HepG2 (cell line): ENCODE measurements at regions of chr14 and their contacts with region 1.

Region 1: GRCh38 chr14:39015360-39015961 is 87.6 kb downstream of the SEC23A start:
- DNase-seq: peak; percentile 84
- ATAC-seq: peak; percentile 41; the same call in 2 of the 3 replicates
- H3K4me3 ChIP-seq: no peak overlapping the region
- H3K27ac ChIP-seq: no peak overlapping the region
- H3K4me1 ChIP-seq: peaks cover 34% of the 10 kb centered on the region
- H3K27me3 ChIP-seq: no peaks in the 10 kb centered on the region
- CTCF ChIP-seq: peak; percentile 88
- EP300 ChIP-seq: no peak
- POLR2A ChIP-seq: no peak
- RAD21 ChIP-seq: peak; percentile 81

Region 2: DNA sequence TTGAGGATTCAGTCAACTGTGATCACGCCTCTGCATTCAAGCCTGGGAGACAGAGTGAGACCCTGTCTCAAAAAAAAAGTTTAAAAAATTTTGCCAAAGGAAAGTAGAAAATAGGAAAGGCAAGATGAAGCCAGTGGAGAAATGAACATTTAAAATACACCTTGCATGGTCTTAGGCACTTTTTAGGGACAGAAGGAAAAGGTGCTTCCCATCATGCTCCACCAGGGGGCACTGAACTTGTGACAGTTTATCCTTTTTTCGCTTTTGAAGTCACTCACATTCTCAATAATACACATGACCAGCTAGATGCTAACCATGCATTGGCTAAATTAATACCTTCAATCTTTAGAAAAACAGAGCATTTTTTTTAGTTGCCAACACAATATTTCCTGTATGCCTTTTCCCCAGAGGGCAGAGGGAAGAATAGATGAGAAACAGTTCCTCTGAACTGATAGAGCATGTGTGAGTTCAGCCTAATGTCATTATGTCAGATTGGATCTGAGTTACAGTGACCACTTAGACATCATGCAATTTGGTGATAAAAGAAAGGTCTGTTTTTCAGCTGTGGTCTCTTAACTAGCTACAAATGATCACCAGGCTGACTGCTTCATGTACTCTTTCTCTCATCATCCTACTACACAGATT is 1029.5 kb before region 1 on chr14:
- CTCF ChIA-PET with region 1: no interaction called
- POLR2A ChIA-PET with region 1: no interaction called
- in situ Hi-C with region 1: no loop called
- intact Hi-C with region 1: loop called (anchors 10 kb)
- DNase-seq: peak; percentile 77
- ATAC-seq: peak; percentile 93
- H3K4me3 ChIP-seq: no peak overlapping the region
- H3K27ac ChIP-seq: no peak overlapping the region
- H3K4me1 ChIP-seq: no peaks in the 10 kb centered on the region
- H3K27me3 ChIP-seq: no peaks in the 10 kb centered on the region; a peak in 1 of 5 replicates
- CTCF ChIP-seq: peak; percentile 89
- EP300 ChIP-seq: no peak
- POLR2A ChIP-seq: no peak
- RAD21 ChIP-seq: no peak

Region 3: GRCh38 chr14:38721822-38722431 is 293.5 kb before region 1 on chr14:
- CTCF ChIA-PET with region 1: interaction called, 26 read pairs
- POLR2A ChIA-PET with region 1: interaction called, 3 read pairs
- in situ Hi-C with region 1: loop called (anchors 5 kb)
- intact Hi-C with region 1: loop called (anchors 1 kb)
- DNase-seq: peak; percentile 77
- ATAC-seq: peak; percentile 98
- H3K4me3 ChIP-seq: no peak overlapping the region
- H3K27ac ChIP-seq: no peak overlapping the region
- H3K4me1 ChIP-seq: no peaks in the 10 kb centered on the region
- H3K27me3 ChIP-seq: no peaks in the 10 kb centered on the region
- CTCF ChIP-seq: peak; percentile 94
- EP300 ChIP-seq: no peak; a peak in 1 of 4 replicates
- POLR2A ChIP-seq: no peak
- RAD21 ChIP-seq: peak; percentile 79

Region 4: GRCh38 chr14:39025810-39026627 is 10.6 kb after region 1 on chr14:
- CTCF ChIA-PET with region 1: no interaction called
- POLR2A ChIA-PET with region 1: interaction called, 59 read pairs
- in situ Hi-C with region 1: no loop called
- intact Hi-C with region 1: loop called (anchors 1 kb)
- DNase-seq: peak; percentile 87
- ATAC-seq: peak; percentile 74
- H3K4me3 ChIP-seq: peak overlapping the region in 1 of 3 experiments; percentile 8; a peak in 1 of 6 replicates
- H3K27ac ChIP-seq: peak overlapping the region; percentile 74
- H3K4me1 ChIP-seq: peaks cover 48% of the 10 kb centered on the region
- H3K27me3 ChIP-seq: no peaks in the 10 kb centered on the region
- CTCF ChIP-seq: 0 out of 2 replicates have a peak, but pooled peaks have one; percentile 8
- EP300 ChIP-seq: peak in 1 of 2 experiments; percentile 86; a peak in 2 of 4 replicates
- POLR2A ChIP-seq: no peak
- RAD21 ChIP-seq: peak; percentile 32; the same call in 1 of the 2 replicates